Ascending aorta (tissue), 2 donors: ENCODE measurements at regions of chr4 and their contacts with region 1.

Region 1: GRCh38 chr4:1011022-1011694 is at the start of gene FGFRL1:
- DNase-seq: peak; percentile 60 to 95
- H3K4me3 ChIP-seq: peak within 1 kb of the TSS; percentile 72 to 89
- H3K27ac ChIP-seq: peak within 1 kb of the TSS; percentile 88 to 89
- H3K4me1 ChIP-seq: peaks cover 21 to 23% of the 10 kb centered on the region in 2 donors
- H3K27me3 ChIP-seq: no peaks in the 10 kb centered on the region
- CTCF ChIP-seq: no peak
- total RNA-seq, gene FGFRL1: 79.1 TPM

Region 2: DNA sequence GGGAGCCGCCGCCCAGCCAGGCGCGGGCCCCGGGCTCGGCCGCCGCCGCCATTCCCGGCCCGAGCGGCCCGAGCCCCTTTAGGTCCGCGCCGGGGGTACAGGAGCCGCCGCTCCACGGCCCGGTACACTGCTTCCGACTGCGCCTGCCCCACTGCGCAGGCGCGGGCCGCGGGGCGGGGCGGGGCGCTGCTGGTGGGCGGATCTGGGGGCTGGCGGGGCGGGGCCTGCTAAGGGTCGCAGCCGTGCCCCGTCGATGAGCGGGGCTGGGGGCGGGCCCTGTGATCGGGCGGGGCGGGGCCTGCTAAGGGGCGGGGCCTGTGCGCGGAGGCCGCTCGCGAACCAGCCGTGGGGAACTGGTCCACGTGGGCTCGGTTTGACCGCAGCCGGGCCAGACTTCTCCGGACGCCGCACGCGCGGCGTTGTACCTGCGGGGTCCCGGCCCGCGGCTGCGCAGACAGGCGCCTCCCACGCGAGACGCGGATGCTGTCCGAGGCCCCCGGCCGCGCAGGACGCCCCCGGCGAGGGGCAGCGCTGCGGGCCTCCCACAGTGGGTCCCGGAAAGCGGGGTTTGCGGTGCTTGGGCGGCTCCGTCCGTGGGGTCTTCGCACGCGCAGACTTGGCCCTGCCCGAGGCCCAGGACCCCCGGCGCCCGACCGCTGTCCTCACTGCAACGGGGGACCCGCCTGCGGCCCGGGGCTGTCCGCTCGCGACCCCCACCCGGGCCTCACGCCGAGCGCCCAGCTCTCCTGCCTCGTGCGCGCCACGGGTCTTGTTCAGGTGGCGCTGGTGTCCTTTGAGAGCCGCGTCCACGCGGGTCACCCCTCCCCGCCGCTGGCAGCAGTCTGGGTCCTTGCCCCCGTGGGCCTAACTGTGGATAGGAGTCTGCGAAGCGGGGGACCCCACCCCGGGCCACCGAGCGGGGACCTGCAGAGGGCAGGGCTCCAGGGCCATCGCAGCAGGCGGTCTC is 37.4 kb before region 1 on chr4 and contains the start of gene DGKQ:
- intact Hi-C with region 1: loop called (anchors 1 kb)
- DNase-seq: peak; percentile 45 to 92
- H3K4me3 ChIP-seq: peak within 1 kb of the TSS; percentile 84 to 92
- H3K27ac ChIP-seq: no peak within 1 kb of the TSS
- H3K4me1 ChIP-seq: peaks cover 9 to 16% of the 10 kb centered on the region in 2 donors
- H3K27me3 ChIP-seq: no peaks in the 10 kb centered on the region
- CTCF ChIP-seq: no peak
- total RNA-seq, gene DGKQ: 20.1 TPM

Region 3: GRCh38 chr4:1033840-1034551 is 22.8 kb after region 1 on chr4:
- intact Hi-C with region 1: loop called (anchors 1 kb)
- DNase-seq: peak in 1 of 2 donors; percentile 91
- H3K4me3 ChIP-seq: peak overlapping the region; percentile 10 to 55
- H3K27ac ChIP-seq: peak overlapping the region; percentile 83 to 91
- H3K4me1 ChIP-seq: peaks cover 36 to 51% of the 10 kb centered on the region in 2 donors
- H3K27me3 ChIP-seq: no peaks in the 10 kb centered on the region
- CTCF ChIP-seq: no peak

Region 4: GRCh38 chr4:1043658-1044468 is 32.7 kb after region 1 on chr4:
- intact Hi-C with region 1: loop called (anchors 1 kb)
- DNase-seq: peak; percentile 94 to 99
- H3K4me3 ChIP-seq: peak overlapping the region; percentile 35 to 56
- H3K27ac ChIP-seq: peak overlapping the region; percentile 80 to 95
- H3K4me1 ChIP-seq: peaks cover 38 to 73% of the 10 kb centered on the region in 2 donors
- H3K27me3 ChIP-seq: no peaks in the 10 kb centered on the region
- CTCF ChIP-seq: no peak

Region 5: GRCh38 chr4:1072830-1073446 is 61.8 kb after region 1 on chr4:
- intact Hi-C with region 1: loop called (anchors 2 kb)
- DNase-seq: peak in 1 of 2 donors; percentile 79
- H3K4me3 ChIP-seq: no peak overlapping the region
- H3K27ac ChIP-seq: no peak overlapping the region
- H3K4me1 ChIP-seq: no peaks in the 10 kb centered on the region
- H3K27me3 ChIP-seq: no peaks in the 10 kb centered on the region
- CTCF ChIP-seq: peak; percentile 38 to 67 (median 54)

Region 6: GRCh38 chr4:1082215-1083182 is 71.3 kb after region 1 on chr4:
- intact Hi-C with region 1: loop called (anchors 1 kb)
- DNase-seq: peak; percentile 76 to 91
- H3K4me3 ChIP-seq: peak overlapping the region in 1 of 2 donors; percentile 27
- H3K27ac ChIP-seq: no peak overlapping the region
- H3K4me1 ChIP-seq: peaks cover 7 to 8% of the 10 kb centered on the region in 2 donors
- H3K27me3 ChIP-seq: no peaks in the 10 kb centered on the region
- CTCF ChIP-seq: no peak